Panc1 (cell line): ENCODE measurements at regions of chr3 and their contacts with region 1.

Region 1: GRCh38 chr3:123652346-123652984 is 67.6 kb upstream of the HACD2 start:
- DNase-seq: peak; percentile 43
- ATAC-seq: peak; percentile 96
- H3K4me3 ChIP-seq: no peak overlapping the region
- H3K27ac ChIP-seq: no peak overlapping the region
- H3K4me1 ChIP-seq: no peaks in the 10 kb centered on the region
- H3K27me3 ChIP-seq: no peaks in the 10 kb centered on the region
- CTCF ChIP-seq: peak; percentile 98

Region 2: GRCh38 chr3:123642182-123642956 is 10.1 kb before region 1 on chr3:
- CTCF ChIA-PET with region 1: interaction called, 3 read pairs
- POLR2A ChIA-PET with region 1: interaction called, 10 read pairs
- in situ Hi-C with region 1: no loop called
- intact Hi-C with region 1: no loop called
- DNase-seq: peak; percentile 77
- ATAC-seq: peak; percentile 90
- H3K4me3 ChIP-seq: no peak overlapping the region
- H3K27ac ChIP-seq: no peak overlapping the region
- H3K4me1 ChIP-seq: no peaks in the 10 kb centered on the region
- H3K27me3 ChIP-seq: no peaks in the 10 kb centered on the region
- CTCF ChIP-seq: peak; percentile 95

Region 3: DNA sequence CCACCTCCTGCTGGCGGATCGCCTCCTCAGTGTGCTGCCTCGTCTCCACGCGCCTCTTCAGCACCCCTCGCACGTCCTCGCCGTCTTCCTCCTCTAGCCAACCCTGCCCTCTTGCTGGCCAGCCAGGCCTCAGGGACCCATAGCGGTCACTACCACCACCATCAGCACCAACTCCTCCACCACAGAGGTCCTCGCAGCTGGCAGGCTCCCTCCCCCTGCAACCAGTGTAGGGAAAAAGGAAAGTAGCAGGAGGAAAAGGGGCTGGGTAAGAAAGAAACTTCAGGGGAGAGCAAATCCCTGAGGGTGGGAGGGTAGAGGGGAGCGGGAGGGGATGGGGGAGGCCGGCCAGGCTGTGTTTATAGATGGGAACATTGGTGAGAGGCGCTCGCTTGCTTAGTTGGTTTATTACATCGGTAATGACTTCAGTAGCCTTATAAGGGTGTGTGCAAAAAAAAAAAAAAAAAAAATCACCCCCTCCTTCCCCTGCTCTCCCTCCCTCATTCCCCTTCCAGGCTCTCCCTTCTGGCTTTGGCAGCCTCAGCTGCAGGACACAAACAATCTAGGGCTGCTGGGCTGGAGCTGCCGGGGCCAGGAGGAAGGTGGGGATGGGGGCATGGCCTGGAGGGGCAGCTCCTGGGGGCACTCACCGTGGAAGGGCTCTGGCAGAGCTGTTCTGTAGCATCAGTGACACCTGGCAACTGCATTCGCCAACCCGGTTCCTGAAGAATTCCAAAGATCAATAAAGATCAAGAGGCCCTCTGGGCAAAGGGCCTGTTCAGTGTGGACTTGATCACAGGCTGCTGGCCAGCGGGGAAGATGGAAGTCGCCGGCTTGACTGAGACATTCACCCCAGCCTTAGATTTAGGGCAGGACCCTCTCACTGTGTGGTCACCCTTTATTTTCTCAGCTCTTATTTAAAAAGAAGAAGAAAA is 48.6 kb after region 1 on chr3:
- CTCF ChIA-PET with region 1: interaction called, 27 read pairs
- POLR2A ChIA-PET with region 1: interaction called, 3 read pairs
- in situ Hi-C with region 1: no loop called
- intact Hi-C with region 1: loop called (anchors 2 kb)
- DNase-seq: no peak
- ATAC-seq: no peak
- H3K4me3 ChIP-seq: no peak overlapping the region
- H3K27ac ChIP-seq: no peak overlapping the region
- H3K4me1 ChIP-seq: no peaks in the 10 kb centered on the region
- H3K27me3 ChIP-seq: no peaks in the 10 kb centered on the region
- CTCF ChIP-seq: no peak

Region 4: GRCh38 chr3:123757281-123757940 is 104.9 kb after region 1 on chr3:
- CTCF ChIA-PET with region 1: no interaction called
- POLR2A ChIA-PET with region 1: no interaction called
- in situ Hi-C with region 1: no loop called
- intact Hi-C with region 1: no loop called
- DNase-seq: no peak
- ATAC-seq: no peak
- H3K4me3 ChIP-seq: no peak overlapping the region
- H3K27ac ChIP-seq: no peak overlapping the region
- H3K4me1 ChIP-seq: peaks cover 9% of the 10 kb centered on the region
- H3K27me3 ChIP-seq: no peaks in the 10 kb centered on the region
- CTCF ChIP-seq: no peak

Region 5: GRCh38 chr3:124409789-124410261 is 757.4 kb after region 1 on chr3:
- CTCF ChIA-PET with region 1: interaction called, 11 read pairs
- POLR2A ChIA-PET with region 1: no interaction called
- in situ Hi-C with region 1: no loop called
- intact Hi-C with region 1: no loop called
- DNase-seq: no peak
- ATAC-seq: no peak
- H3K4me3 ChIP-seq: no peak overlapping the region
- H3K27ac ChIP-seq: no peak overlapping the region
- H3K4me1 ChIP-seq: no peaks in the 10 kb centered on the region
- H3K27me3 ChIP-seq: peaks cover 16% of the 10 kb centered on the region; the same call in 1 of the 2 replicates
- CTCF ChIP-seq: no peak